Activated T-helper 1 cell treated with anti-CD3 and anti-CD28 coated beads, Interleukin-12 subunit alpha, Interleukin-12 subunit beta, Interleukin-2, Interleukin-4 antibody, amounts not matched to agents 30 ng/mL and 10 ng/mL and 1 ng/mL, durations not matched to agents 14 hours and 24 hours and 36 hours (primary cell): ENCODE measurements at regions of chr17 and their contacts with region 1.

Region 1: GRCh38 chr17:31680126-31680525 is 178.9 kb downstream of the COPRS start:
- DNase-seq: peak; percentile 52
- H3K4me3 Mint-ChIP-seq: peak overlapping the region; percentile 23
- H3K27ac Mint-ChIP-seq: peak overlapping the region; percentile 87
- H3K4me1 Mint-ChIP-seq: peaks cover 11% of the 10 kb centered on the region
- H3K27me3 Mint-ChIP-seq: peaks cover 30% of the 10 kb centered on the region

Region 2: GRCh38 chr17:31549525-31550388 is 130.4 kb before region 1 on chr17:
- intact Hi-C with region 1: loop called (anchors 1 kb)
- DNase-seq: peak; percentile 86
- H3K4me3 Mint-ChIP-seq: peak overlapping the region; percentile 92
- H3K27ac Mint-ChIP-seq: peak overlapping the region; percentile 89
- H3K4me1 Mint-ChIP-seq: peaks cover 15% of the 10 kb centered on the region
- H3K27me3 Mint-ChIP-seq: peaks cover 18% of the 10 kb centered on the region

Region 3: GRCh38 chr17:31609996-31610910 is 69.9 kb before region 1 on chr17:
- intact Hi-C with region 1: no loop called
- DNase-seq: no peak
- H3K4me3 Mint-ChIP-seq: no peak overlapping the region
- H3K27ac Mint-ChIP-seq: no peak overlapping the region
- H3K4me1 Mint-ChIP-seq: no peaks in the 10 kb centered on the region
- H3K27me3 Mint-ChIP-seq: peaks cover 8% of the 10 kb centered on the region

Region 4: DNA sequence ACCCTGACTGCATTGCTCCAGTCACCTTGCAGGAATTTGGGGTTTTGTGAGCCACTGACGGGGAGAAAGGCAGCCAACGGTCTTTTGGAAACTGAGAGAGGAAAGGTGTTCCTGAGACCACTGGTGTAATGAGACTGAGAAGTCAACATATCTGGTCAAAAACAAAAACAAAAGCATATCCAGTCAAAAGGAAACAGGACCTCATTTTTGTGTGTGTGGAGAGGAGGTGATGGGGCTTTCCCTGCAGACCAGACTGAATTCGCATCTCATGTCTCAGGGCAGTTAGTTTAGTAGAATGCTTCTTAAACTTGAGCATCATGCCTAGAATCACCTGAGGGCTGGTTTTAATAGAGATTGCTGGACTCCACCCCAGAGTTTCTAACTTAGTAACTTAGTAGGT is 19.4 kb before region 1 on chr17:
- intact Hi-C with region 1: loop called (anchors 2 kb)
- DNase-seq: no peak
- H3K4me3 Mint-ChIP-seq: no peak overlapping the region
- H3K27ac Mint-ChIP-seq: no peak overlapping the region
- H3K4me1 Mint-ChIP-seq: peaks cover 15% of the 10 kb centered on the region
- H3K27me3 Mint-ChIP-seq: peaks cover 17% of the 10 kb centered on the region